ENCODE measurements at regions of chr2 and their contacts with region 1.

Region 1: GRCh38 chr2:22879009-22879863 is 505.7 kb upstream of the KLHL29 start:
- DNase-seq: no peak
- H3K27ac ChIP-seq: no peak overlapping the region
- CTCF ChIP-seq: no peak

Region 2: GRCh38 chr2:22867973-22868372 is 11.3 kb before region 1 on chr2:
- CTCF ChIA-PET with region 1: interaction called, 10 read pairs
- POLR2A ChIA-PET with region 1: no interaction called
- DNase-seq: no peak
- H3K27ac ChIP-seq: no peak overlapping the region
- CTCF ChIP-seq: no peak

Region 3: DNA sequence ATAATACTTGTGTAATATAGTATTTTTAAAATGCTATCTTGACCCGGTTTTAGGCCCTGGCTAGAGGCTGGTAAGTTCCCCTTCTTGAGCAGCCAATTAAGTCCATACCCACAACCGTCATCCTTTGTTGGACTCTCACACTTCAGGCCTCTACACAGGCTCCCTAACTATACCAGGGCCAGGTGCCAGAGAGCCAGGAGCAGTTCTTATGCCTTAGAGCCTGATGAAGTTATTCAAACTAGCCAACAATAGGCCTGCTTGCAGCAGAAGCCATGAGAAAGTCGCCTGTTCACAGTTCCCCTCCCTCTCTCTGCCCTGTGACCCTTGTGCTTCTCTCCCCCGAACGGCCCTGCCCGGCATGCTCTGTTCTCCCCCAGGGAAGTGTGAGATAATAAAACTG is 51.5 kb after region 1 on chr2:
- CTCF ChIA-PET with region 1: no interaction called
- POLR2A ChIA-PET with region 1: no interaction called
- DNase-seq: no peak
- H3K27ac ChIP-seq: no peak overlapping the region
- CTCF ChIP-seq: no peak